ENCODE measurements at regions of chr1 and their contacts with region 1.

Region 1: GRCh38 chr1:167059045-167059808 is 30.9 kb downstream of the GPA33 start:
- DNase-seq: peak; percentile 84
- H3K4me3 ChIP-seq: peak overlapping the region in 1 of 8 donors; percentile 39
- H3K27ac ChIP-seq: no peak overlapping the region
- H3K4me1 ChIP-seq: peaks cover 0 to 9% (median 4%) of the 10 kb centered on the region in 6 donors
- H3K27me3 ChIP-seq: no peaks in the 10 kb centered on the region
- CTCF ChIP-seq: peak; percentile 88 to 97 (median 93)
- POLR2A ChIP-seq: no peak

Region 2: GRCh38 chr1:166910396-166910994 is 148.7 kb before region 1 on chr1:
- intact Hi-C with region 1: loop called (anchors 2 kb)
- DNase-seq: no peak
- H3K4me3 ChIP-seq: no peak overlapping the region
- H3K27ac ChIP-seq: no peak overlapping the region
- H3K4me1 ChIP-seq: peaks cover 0 to 4% (median 0%) of the 10 kb centered on the region in 6 donors
- H3K27me3 ChIP-seq: no peaks in the 10 kb centered on the region
- CTCF ChIP-seq: peak; percentile 64 to 86 (median 72)
- POLR2A ChIP-seq: no peak

Region 3: GRCh38 chr1:167973832-167974231 is 914.6 kb after region 1 on chr1:
- intact Hi-C with region 1: no loop called
- DNase-seq: no peak
- H3K4me3 ChIP-seq: no peak overlapping the region
- H3K27ac ChIP-seq: no peak overlapping the region
- H3K4me1 ChIP-seq: peaks cover 0 to under 1% (median 0%) of the 10 kb centered on the region in 6 donors
- H3K27me3 ChIP-seq: no peaks in the 10 kb centered on the region
- CTCF ChIP-seq: no peak
- POLR2A ChIP-seq: no peak

Measured in spleen (tissue), 13 donors.